ENCODE measurements at regions of chr1 and their contacts with region 1.

Region 1: GRCh38 chr1:198937231-198938031 is 298.6 kb downstream of the PTPRC start:
- DNase-seq: peak; percentile 91
- H3K4me3 Mint-ChIP-seq: no peak overlapping the region
- H3K27ac Mint-ChIP-seq: peak overlapping the region; percentile 93
- H3K4me1 Mint-ChIP-seq: peaks cover 15% of the 10 kb centered on the region
- H3K27me3 Mint-ChIP-seq: no peaks in the 10 kb centered on the region

Region 2: DNA sequence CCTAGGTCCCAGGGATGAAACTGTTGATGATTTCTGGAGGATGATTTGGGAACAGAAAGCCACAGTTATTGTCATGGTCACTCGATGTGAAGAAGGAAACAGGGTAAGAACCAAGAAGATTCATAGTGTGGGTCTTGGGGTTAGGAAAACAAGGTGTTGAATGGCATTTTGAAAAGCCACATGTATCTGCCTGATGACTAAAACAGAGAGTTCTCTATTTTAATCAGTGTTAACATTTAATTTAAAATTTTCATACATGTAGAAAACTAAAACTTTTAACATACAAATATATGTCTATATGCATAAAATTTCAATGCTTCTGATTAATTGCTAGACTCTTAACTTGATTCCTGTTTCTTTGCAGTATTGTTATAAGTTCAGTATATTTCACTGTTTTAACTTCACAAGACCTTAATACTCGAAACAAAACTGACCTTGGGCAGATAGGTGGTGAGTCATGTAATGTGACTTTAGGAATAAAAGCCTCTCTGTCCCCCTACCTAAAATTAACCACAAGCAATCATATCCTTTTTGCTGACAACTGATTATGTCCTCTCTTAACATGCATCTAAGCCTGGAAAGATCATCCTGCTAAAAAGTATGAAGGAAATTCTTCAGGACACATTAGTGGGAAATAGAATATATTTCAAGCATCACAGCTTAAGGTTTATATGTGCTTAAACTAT is 203.0 kb before region 1 on chr1:
- intact Hi-C with region 1: loop called (anchors 5 kb)
- DNase-seq: no peak
- H3K4me3 Mint-ChIP-seq: peak overlapping the region; percentile 41
- H3K27ac Mint-ChIP-seq: peak overlapping the region; percentile 90
- H3K4me1 Mint-ChIP-seq: peaks cover 50% of the 10 kb centered on the region
- H3K27me3 Mint-ChIP-seq: no peaks in the 10 kb centered on the region

Region 3: DNA sequence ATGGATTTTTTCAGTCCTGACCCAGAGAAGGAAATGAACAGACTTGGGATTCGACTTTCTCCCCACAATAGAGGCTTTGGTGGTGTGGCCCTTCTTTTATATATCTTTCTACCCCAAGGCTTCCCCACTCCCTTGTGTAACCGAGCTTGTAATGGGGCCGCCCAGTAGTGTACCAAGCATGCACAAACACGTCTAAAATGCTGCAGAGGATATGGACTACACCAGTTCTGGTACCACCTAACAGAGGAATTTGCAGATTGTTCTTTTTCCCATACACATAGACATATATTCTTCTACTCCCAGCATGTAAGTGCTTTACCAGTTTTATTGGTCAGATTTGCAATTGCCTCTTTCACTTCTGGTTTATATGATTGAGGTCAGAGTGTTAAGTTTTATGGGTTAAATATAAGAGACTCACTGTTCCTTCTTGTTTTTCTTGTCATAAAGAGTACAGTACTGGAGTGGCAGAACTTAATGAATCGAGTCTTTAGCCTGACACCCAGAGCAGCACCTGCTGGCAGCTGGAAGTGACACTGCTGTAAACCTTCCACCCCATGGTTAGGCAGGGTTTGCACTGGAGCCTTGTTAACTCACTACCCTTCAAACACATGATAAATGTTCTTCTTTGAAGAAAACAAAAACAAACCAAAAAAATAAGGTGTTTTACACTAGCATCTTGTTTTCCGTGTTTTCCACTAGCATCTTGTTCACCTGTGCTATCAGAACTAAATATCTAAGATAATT is 100.0 kb before region 1 on chr1:
- intact Hi-C with region 1: no loop called
- DNase-seq: no peak
- H3K4me3 Mint-ChIP-seq: no peak overlapping the region
- H3K27ac Mint-ChIP-seq: no peak overlapping the region
- H3K4me1 Mint-ChIP-seq: peaks cover 5% of the 10 kb centered on the region
- H3K27me3 Mint-ChIP-seq: no peaks in the 10 kb centered on the region

Region 4: DNA sequence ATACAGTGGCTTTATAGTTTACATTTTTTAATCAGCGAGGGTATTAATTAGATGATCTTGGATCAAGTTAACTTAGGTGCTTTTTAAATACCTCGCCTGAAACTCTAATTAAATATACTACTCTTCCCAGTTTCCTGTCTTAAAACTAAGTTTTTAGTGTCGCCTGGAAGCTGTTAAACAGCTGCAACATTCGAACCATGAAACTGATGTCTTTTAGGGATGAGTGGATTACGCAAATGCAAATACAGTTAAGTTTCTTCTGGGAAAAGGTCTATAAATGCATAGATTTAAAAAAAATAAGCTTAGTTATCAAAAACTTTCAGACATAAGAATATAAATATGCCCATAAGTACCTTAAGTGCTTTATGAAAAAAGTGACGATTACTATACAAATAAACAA is 70.2 kb before region 1 on chr1:
- intact Hi-C with region 1: no loop called
- DNase-seq: no peak
- H3K4me3 Mint-ChIP-seq: no peak overlapping the region
- H3K27ac Mint-ChIP-seq: no peak overlapping the region
- H3K4me1 Mint-ChIP-seq: peaks cover 8% of the 10 kb centered on the region
- H3K27me3 Mint-ChIP-seq: no peaks in the 10 kb centered on the region

Region 5: GRCh38 chr1:198880818-198881597 is 56.4 kb before region 1 on chr1:
- intact Hi-C with region 1: loop called (anchors 1 kb)
- DNase-seq: no peak
- H3K4me3 Mint-ChIP-seq: peak overlapping the region; percentile 23
- H3K27ac Mint-ChIP-seq: peak overlapping the region; percentile 86
- H3K4me1 Mint-ChIP-seq: peaks cover 34% of the 10 kb centered on the region
- H3K27me3 Mint-ChIP-seq: no peaks in the 10 kb centered on the region

Region 6: GRCh38 chr1:199009447-199009846 is 72.0 kb after region 1 on chr1:
- intact Hi-C with region 1: loop called (anchors 1 kb)
- DNase-seq: peak; percentile 71
- H3K4me3 Mint-ChIP-seq: peak overlapping the region; percentile 50
- H3K27ac Mint-ChIP-seq: peak overlapping the region; percentile 62
- H3K4me1 Mint-ChIP-seq: peaks cover 43% of the 10 kb centered on the region
- H3K27me3 Mint-ChIP-seq: peaks cover 2% of the 10 kb centered on the region

Region 7: DNA sequence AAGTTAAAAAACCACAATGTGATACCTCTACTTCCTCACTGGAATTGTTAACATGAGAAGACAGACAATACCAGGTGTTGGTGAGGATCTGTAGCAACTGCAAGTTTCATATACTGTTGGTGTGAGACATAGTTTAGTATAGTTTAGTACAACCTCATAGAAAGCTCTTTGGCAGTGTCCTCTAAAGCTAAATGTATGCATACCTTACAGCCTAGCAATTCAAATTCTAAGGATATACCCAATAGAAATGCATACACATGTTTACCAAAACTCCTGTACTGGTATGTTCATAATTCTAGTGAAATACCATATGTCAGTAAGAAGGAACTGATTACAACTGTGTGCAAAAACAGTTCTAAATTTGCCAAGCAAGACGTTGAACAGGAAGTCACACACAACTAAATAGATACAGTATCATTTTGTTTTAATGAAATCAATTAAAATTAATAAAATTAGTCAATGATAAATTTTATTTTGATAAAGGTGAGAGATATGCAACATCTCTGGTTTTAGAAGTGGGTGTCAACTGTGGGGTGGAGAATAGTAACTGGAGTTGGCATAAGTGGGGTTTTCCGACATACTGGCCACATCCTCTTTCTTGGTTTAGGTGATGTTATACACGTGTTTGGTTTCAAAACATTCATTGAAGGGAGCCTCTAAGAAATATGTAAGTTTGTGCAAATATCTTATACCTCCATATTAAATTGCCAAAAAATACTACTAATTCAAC is 152.1 kb after region 1 on chr1:
- intact Hi-C with region 1: loop called (anchors 2 kb)
- DNase-seq: peak; percentile 87
- H3K4me3 Mint-ChIP-seq: peak overlapping the region; percentile 49
- H3K27ac Mint-ChIP-seq: peak overlapping the region; percentile 67
- H3K4me1 Mint-ChIP-seq: peaks cover 36% of the 10 kb centered on the region
- H3K27me3 Mint-ChIP-seq: no peaks in the 10 kb centered on the region

Region 8: GRCh38 chr1:199226163-199226562 is 288.7 kb after region 1 on chr1:
- intact Hi-C with region 1: loop called (anchors 2 kb)
- DNase-seq: peak; percentile 80
- H3K4me3 Mint-ChIP-seq: peak overlapping the region; percentile 47
- H3K27ac Mint-ChIP-seq: peak overlapping the region; percentile 48
- H3K4me1 Mint-ChIP-seq: peaks cover 14% of the 10 kb centered on the region
- H3K27me3 Mint-ChIP-seq: no peaks in the 10 kb centered on the region

Region 9: GRCh38 chr1:199353906-199354305 is 416.5 kb after region 1 on chr1:
- intact Hi-C with region 1: no loop called
- DNase-seq: no peak
- H3K4me3 Mint-ChIP-seq: no peak overlapping the region
- H3K27ac Mint-ChIP-seq: no peak overlapping the region
- H3K4me1 Mint-ChIP-seq: no peaks in the 10 kb centered on the region
- H3K27me3 Mint-ChIP-seq: no peaks in the 10 kb centered on the region